CD8-positive, alpha-beta memory T cell (primary cell): ENCODE measurements at regions of chr14 and their contacts with region 1.

Region 1: DNA sequence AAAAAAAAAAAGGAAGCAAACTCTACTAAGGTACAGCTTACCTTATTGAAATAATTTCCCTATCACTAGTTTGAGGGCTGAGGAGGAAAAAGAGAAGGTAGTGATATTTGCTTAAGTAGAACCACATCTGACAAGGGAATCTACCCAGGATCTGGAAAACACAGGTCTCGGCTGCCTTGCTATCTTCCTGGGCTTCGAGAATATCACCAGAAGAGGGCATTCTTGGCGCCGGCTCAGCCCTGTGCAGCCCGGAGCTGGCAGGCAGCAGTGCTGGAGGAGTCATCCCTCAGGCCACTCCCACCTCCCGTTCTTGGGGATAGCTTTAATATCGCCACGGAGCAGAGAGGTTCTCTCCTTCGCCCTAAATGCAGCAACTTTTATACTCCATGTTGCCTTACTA is 1181.2 kb downstream of the VRK1 start:
- DNase-seq: peak; percentile 56 to 82 (median 65)
- H3K4me3 ChIP-seq: peak overlapping the region; percentile 56
- H3K4me3 Mint-ChIP-seq: peak overlapping the region; percentile 86 to 98 (median 89)
- H3K27ac ChIP-seq: peak overlapping the region; percentile 52
- H3K27ac Mint-ChIP-seq: peak overlapping the region; percentile 66 to 99 (median 92)
- H3K4me1 ChIP-seq: peaks cover 53% of the 10 kb centered on the region
- H3K4me1 Mint-ChIP-seq: peaks cover 55 to 64% (median 58%) of the 10 kb centered on the region in 3 donors
- H3K27me3 ChIP-seq: no peaks in the 10 kb centered on the region
- H3K27me3 Mint-ChIP-seq: peaks cover 0 to 1% of the 10 kb centered on the region in 2 donors

Region 2: GRCh38 chr14:97707603-97708002 is 270.7 kb before region 1 on chr14:
- CTCF ChIA-PET with region 1: interaction called, 14 read pairs
- POLR2A ChIA-PET with region 1: no interaction called
- DNase-seq: peak in 2 of 5 donors; percentile 24 to 62
- H3K4me3 ChIP-seq: peak overlapping the region; percentile 13
- H3K4me3 Mint-ChIP-seq: peak overlapping the region; percentile 71 to 89 (median 82)
- H3K27ac ChIP-seq: no peak overlapping the region
- H3K27ac Mint-ChIP-seq: peak overlapping the region; percentile 66 to 95 (median 90)
- H3K4me1 ChIP-seq: peaks cover 85% of the 10 kb centered on the region
- H3K4me1 Mint-ChIP-seq: peaks cover 96 to 100% (median 99%) of the 10 kb centered on the region in 3 donors
- H3K27me3 ChIP-seq: no peaks in the 10 kb centered on the region
- H3K27me3 Mint-ChIP-seq: no peaks in the 10 kb centered on the region

Region 3: GRCh38 chr14:97960436-97960835 is 17.9 kb before region 1 on chr14:
- CTCF ChIA-PET with region 1: no interaction called
- POLR2A ChIA-PET with region 1: no interaction called
- DNase-seq: no peak
- H3K4me3 ChIP-seq: no peak overlapping the region
- H3K4me3 Mint-ChIP-seq: no peak overlapping the region
- H3K27ac ChIP-seq: no peak overlapping the region
- H3K27ac Mint-ChIP-seq: peak overlapping the region in 1 of 8 donors; percentile 58
- H3K4me1 ChIP-seq: peaks cover 16% of the 10 kb centered on the region
- H3K4me1 Mint-ChIP-seq: peaks cover 26 to 52% (median 46%) of the 10 kb centered on the region in 3 donors
- H3K27me3 ChIP-seq: no peaks in the 10 kb centered on the region
- H3K27me3 Mint-ChIP-seq: no peaks in the 10 kb centered on the region

Region 4: GRCh38 chr14:97994020-97994531 is 15.7 kb after region 1 on chr14:
- CTCF ChIA-PET with region 1: interaction called, 13 read pairs
- POLR2A ChIA-PET with region 1: no interaction called
- DNase-seq: peak in 3 of 5 donors; percentile 57 to 75 (median 68)
- H3K4me3 ChIP-seq: peak overlapping the region; percentile 4
- H3K4me3 Mint-ChIP-seq: peak overlapping the region in 6 of 7 donors; percentile 42 to 71 (median 52)
- H3K27ac ChIP-seq: peak overlapping the region; percentile 4
- H3K27ac Mint-ChIP-seq: peak overlapping the region; percentile 72 to 96 (median 88)
- H3K4me1 ChIP-seq: peaks cover 79% of the 10 kb centered on the region
- H3K4me1 Mint-ChIP-seq: peaks cover 42 to 61% (median 45%) of the 10 kb centered on the region in 3 donors
- H3K27me3 ChIP-seq: no peaks in the 10 kb centered on the region
- H3K27me3 Mint-ChIP-seq: no peaks in the 10 kb centered on the region

Region 5: GRCh38 chr14:98018628-98019027 is 40.3 kb after region 1 on chr14:
- CTCF ChIA-PET with region 1: interaction called, 18 read pairs
- POLR2A ChIA-PET with region 1: interaction called, 4 read pairs
- DNase-seq: peak in 3 of 5 donors; percentile 52 to 75 (median 63)
- H3K4me3 ChIP-seq: no peak overlapping the region
- H3K4me3 Mint-ChIP-seq: peak overlapping the region in 3 of 7 donors; percentile 14 to 42 (median 38)
- H3K27ac ChIP-seq: no peak overlapping the region
- H3K27ac Mint-ChIP-seq: peak overlapping the region in 4 of 8 donors; percentile 4 to 62 (median 26)
- H3K4me1 ChIP-seq: peaks cover 59% of the 10 kb centered on the region
- H3K4me1 Mint-ChIP-seq: peaks cover 51 to 74% (median 53%) of the 10 kb centered on the region in 3 donors
- H3K27me3 ChIP-seq: no peaks in the 10 kb centered on the region
- H3K27me3 Mint-ChIP-seq: no peaks in the 10 kb centered on the region

Region 6: GRCh38 chr14:98138666-98139065 is 160.3 kb after region 1 on chr14:
- CTCF ChIA-PET with region 1: interaction called, 37 read pairs
- POLR2A ChIA-PET with region 1: interaction called, 5 read pairs
- DNase-seq: peak; percentile 37 to 82 (median 62)
- H3K4me3 ChIP-seq: peak overlapping the region; percentile 37
- H3K4me3 Mint-ChIP-seq: peak overlapping the region; percentile 70 to 85 (median 77)
- H3K27ac ChIP-seq: no peak overlapping the region
- H3K27ac Mint-ChIP-seq: peak overlapping the region; percentile 40 to 94 (median 84)
- H3K4me1 ChIP-seq: peaks cover 84% of the 10 kb centered on the region
- H3K4me1 Mint-ChIP-seq: peaks cover 79 to 97% (median 92%) of the 10 kb centered on the region in 3 donors
- H3K27me3 ChIP-seq: no peaks in the 10 kb centered on the region
- H3K27me3 Mint-ChIP-seq: no peaks in the 10 kb centered on the region